ENCODE measurements at regions of chr19 and their contacts with region 1.

Region 1: GRCh38 chr19:19591133-19591825 is 27.2 kb downstream of the PBX4 start:
- DNase-seq: no peak
- ATAC-seq: peak; percentile 80
- H3K4me3 Mint-ChIP-seq: peak overlapping the region; percentile 67
- H3K27ac Mint-ChIP-seq: peak overlapping the region; percentile 95
- H3K4me1 Mint-ChIP-seq: peaks cover 57% of the 10 kb centered on the region
- H3K27me3 Mint-ChIP-seq: no peaks in the 10 kb centered on the region

Region 2: DNA sequence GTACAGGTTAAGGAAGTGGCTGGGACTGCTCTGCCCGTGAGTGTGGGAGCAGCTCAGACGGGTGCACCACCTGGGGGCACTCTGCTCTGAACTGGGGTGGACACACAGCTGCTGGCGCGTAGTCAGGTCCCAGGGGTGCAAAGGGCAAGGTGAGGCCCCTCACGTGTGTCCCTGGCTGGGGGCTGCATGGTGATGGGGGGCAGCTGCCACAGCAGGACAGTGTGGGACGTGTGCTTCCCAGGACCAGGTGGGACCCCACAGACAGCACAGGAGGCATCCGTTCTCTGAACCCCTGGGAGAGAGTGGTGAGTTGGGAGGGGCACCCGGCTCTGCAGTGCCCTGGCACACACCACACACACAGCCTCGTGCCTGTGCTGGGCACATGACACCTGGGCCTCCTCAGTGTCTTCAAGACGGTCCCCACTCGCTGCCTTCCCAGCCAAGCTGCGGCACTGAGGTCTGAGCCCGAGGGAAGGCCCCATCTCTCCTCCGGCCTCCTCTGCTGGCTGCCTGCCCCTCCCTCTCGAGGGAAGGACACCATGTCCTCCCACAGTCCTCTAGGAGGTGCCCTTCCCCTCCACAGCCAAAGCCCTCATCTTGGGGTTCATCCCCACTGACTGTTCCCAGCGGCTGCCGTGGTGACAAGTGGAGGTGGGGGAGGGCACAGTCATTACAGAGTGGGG is 28.5 kb before region 1 on chr19:
- POLR2A ChIA-PET with region 1: no interaction called
- DNase-seq: no peak
- ATAC-seq: peak; percentile 71
- H3K4me3 Mint-ChIP-seq: no peak overlapping the region
- H3K27ac Mint-ChIP-seq: peak overlapping the region; percentile 64
- H3K4me1 Mint-ChIP-seq: peaks cover 5% of the 10 kb centered on the region
- H3K27me3 Mint-ChIP-seq: no peaks in the 10 kb centered on the region

Region 3: DNA sequence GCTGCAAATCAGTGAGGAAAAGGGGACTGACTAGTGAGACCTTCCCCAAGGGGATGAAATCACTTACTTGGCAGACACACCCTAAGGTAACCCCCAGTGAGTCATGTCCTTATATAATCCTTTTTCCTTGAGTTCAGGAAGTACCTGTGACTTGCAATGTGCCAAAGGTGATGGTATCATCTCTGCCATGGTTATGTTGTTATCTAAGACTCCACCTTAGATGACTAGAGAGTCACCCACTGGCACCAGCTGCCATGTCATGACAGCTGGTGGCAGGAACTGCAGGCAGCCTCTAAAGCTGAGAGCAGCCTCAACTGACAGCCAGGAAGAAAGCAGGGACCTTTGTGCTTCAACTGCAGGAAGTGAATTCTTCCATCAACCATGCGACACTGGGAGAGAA is 14.7 kb after region 1 on chr19:
- POLR2A ChIA-PET with region 1: interaction called, 16 read pairs
- DNase-seq: no peak
- ATAC-seq: peak; percentile 77
- H3K4me3 Mint-ChIP-seq: peak overlapping the region; percentile 65
- H3K27ac Mint-ChIP-seq: peak overlapping the region; percentile 93
- H3K4me1 Mint-ChIP-seq: peaks cover 51% of the 10 kb centered on the region
- H3K27me3 Mint-ChIP-seq: no peaks in the 10 kb centered on the region

Region 4: GRCh38 chr19:19618219-19619051 is 27.2 kb after region 1 on chr19 and contains the start of gene PBX4:
- POLR2A ChIA-PET with region 1: interaction called, 13 read pairs
- DNase-seq: peak; percentile 99
- ATAC-seq: peak; percentile 94
- H3K4me3 Mint-ChIP-seq: peak within 1 kb of the TSS; percentile 86
- H3K27ac Mint-ChIP-seq: peak within 1 kb of the TSS; percentile 87
- H3K4me1 Mint-ChIP-seq: peaks cover 35% of the 10 kb centered on the region
- H3K27me3 Mint-ChIP-seq: peaks cover 2% of the 10 kb centered on the region
- total RNA-seq, gene PBX4: 41.3 to 46.1 TPM

Region 5: DNA sequence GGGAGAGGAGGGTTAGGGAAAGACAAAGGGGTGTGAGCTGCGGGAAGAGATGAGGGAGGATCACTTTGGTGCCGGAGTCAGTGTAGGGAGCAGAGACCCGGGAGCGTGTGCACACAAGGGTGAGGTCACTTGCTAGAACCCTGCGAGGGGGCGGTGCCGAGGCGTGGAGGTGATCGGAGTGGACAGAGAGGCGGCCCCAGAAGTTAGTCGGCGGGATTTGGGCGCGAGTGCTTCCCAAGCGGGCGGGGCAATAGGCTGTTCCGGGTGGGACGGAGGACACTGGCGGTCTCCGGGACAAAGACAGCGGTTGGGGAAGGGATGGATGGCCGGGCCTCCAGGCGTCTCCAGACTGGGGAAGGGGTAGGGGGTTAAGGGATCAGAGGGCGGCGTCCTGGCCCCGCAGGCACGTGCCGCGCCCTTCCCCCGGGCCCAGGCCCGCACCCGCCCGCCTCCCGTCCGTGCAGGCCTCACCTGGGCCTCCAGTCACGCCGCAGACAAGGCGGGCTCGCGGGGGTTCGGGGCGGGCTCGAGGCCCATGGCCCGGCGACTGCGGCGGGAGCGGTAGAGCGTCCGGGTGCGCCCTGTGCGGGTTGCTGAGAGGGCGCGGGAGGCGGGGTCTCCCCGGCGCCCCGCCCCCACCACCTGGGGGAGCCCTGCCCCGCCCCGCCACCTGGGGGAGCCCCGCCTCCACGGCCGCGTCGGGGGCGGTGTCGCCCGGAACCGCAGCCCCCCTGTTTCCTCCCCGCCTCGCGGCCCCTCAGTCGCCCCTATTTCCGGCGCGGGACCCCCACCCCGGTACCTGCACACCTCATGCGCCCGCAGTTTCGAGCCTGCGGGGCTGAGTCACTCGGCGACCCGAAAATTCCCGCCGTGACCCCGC is 36.6 kb after region 1 on chr19 and contains the start of gene LPAR2:
- POLR2A ChIA-PET with region 1: interaction called, 12 read pairs
- DNase-seq: peak; percentile 92
- ATAC-seq: peak; percentile 75
- H3K4me3 Mint-ChIP-seq: peak within 1 kb of the TSS; percentile 99
- H3K27ac Mint-ChIP-seq: peak within 1 kb of the TSS; percentile 96
- H3K4me1 Mint-ChIP-seq: peaks cover 26% of the 10 kb centered on the region
- H3K27me3 Mint-ChIP-seq: no peaks in the 10 kb centered on the region
- total RNA-seq, gene LPAR2: 73.6 to 73.8 TPM